Activated B cell treated with CpG ODN at 0.5 μM for 24 hours (primary cell): ENCODE measurements at regions of chr20 and their contacts with region 1.

Region 1: DNA sequence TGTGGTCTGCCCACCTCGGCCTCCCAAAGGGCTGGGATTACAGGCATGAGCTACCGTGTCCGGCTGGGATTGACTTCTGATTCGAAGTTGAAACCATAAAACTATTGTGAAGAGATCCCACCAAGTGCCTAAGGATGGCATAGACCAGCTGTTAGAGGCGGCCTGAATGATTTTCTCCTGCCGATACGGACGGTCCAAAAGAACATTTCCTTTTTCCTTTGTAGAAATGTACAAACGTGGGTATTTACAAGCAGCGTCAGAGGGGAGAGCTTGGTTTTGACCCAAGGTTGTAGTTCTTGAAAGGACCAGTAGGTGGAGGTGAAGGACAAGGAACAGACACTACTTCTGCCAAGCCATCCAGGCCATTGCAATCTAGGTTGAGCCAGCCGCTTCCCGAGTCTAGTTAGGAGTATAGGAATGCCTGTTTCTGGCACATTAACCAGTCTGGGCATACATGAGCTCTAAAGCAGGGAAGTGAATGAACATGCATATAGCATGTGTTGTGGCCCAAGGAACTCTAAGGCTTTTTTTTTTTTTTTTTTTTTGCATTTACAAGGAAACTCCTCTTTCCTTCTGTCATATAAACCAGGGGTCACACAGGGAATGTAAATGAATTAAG is 29.1 kb downstream of the MOCS3 start:
- DNase-seq: no peak
- ATAC-seq: peak; percentile 94
- H3K4me3 Mint-ChIP-seq: no peak overlapping the region
- H3K27ac Mint-ChIP-seq: no peak overlapping the region
- H3K4me1 Mint-ChIP-seq: peaks cover 10% of the 10 kb centered on the region
- H3K27me3 Mint-ChIP-seq: peaks cover 22% of the 10 kb centered on the region
- CTCF ChIP-seq: peak; percentile 44

Region 2: DNA sequence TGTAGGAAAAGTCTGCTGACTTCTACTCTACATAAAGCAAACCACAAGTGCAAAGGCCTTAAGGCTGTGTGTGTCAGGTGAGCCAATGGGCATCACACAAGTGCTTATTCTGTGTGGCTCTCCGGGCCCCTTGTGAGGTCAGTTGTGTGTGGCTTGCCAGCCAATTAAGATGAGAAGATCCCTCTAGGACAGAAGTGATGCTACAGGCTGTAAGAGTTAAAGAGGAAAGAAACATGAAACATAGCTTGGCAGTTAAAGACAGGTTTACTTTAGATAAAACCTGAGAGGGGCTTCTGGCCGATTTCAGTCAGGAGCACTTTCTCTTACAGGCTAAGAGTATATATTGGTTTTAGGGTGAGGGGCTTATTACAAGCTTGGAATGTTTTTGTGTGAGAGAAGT is 312.4 kb after region 1 on chr20:
- CTCF ChIA-PET with region 1: interaction called, 109 read pairs
- POLR2A ChIA-PET with region 1: no interaction called
- intact Hi-C with region 1: no loop called
- DNase-seq: no peak
- ATAC-seq: no peak
- H3K4me3 Mint-ChIP-seq: no peak overlapping the region
- H3K27ac Mint-ChIP-seq: no peak overlapping the region
- H3K4me1 Mint-ChIP-seq: no peaks in the 10 kb centered on the region
- H3K27me3 Mint-ChIP-seq: peaks cover 19% of the 10 kb centered on the region
- CTCF ChIP-seq: no peak

Region 3: DNA sequence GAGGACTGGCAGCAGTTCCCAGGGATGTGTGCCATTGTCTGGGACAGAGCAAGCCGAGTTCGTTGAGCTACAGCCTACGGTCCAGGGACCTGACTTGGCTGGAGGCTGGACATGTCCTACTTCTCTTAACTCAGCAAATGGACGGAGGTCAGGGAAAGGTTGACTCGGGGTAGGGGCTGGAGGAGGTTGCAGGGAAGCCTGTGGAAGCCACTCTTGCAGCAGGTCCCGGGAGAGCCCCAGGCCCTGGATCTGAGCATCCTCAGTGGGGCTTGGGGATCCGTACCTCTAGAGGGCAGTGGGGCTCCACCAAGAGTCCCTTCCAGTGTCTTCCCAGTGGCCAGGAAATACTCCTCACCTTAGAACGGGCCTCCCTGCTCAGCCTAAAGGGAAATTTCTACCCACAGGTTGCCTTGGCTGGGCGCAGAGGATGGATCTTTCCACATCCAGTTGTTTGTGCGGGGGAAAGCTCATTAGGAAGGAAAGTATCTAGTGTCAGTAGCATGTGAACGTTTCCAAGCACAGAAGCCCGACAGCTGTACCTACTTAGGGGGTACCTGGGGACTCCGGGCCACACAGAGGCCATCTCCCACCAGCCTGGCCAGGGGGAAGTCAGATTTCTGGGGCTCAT is 384.6 kb after region 1 on chr20:
- CTCF ChIA-PET with region 1: interaction called, 3 read pairs
- POLR2A ChIA-PET with region 1: no interaction called
- intact Hi-C with region 1: loop called (anchors 5 kb)
- DNase-seq: peak; percentile 42
- ATAC-seq: peak; percentile 62
- H3K4me3 Mint-ChIP-seq: no peak overlapping the region
- H3K27ac Mint-ChIP-seq: no peak overlapping the region
- H3K4me1 Mint-ChIP-seq: peaks cover 4% of the 10 kb centered on the region
- H3K27me3 Mint-ChIP-seq: peaks cover 5% of the 10 kb centered on the region
- CTCF ChIP-seq: peak; percentile 38

Region 4: GRCh38 chr20:51624157-51624731 is 636.5 kb after region 1 on chr20:
- CTCF ChIA-PET with region 1: interaction called, 36 read pairs
- POLR2A ChIA-PET with region 1: no interaction called
- intact Hi-C with region 1: loop called (anchors 1 kb)
- DNase-seq: peak; percentile 55
- ATAC-seq: peak; percentile 64
- H3K4me3 Mint-ChIP-seq: no peak overlapping the region
- H3K27ac Mint-ChIP-seq: no peak overlapping the region
- H3K4me1 Mint-ChIP-seq: peaks cover 2% of the 10 kb centered on the region
- H3K27me3 Mint-ChIP-seq: peaks cover 18% of the 10 kb centered on the region
- CTCF ChIP-seq: no peak

Region 5: GRCh38 chr20:52083627-52084232 is 1096.0 kb after region 1 on chr20:
- CTCF ChIA-PET with region 1: interaction called, 4 read pairs
- POLR2A ChIA-PET with region 1: no interaction called
- intact Hi-C with region 1: loop called (anchors 5 kb)
- DNase-seq: no peak
- ATAC-seq: no peak
- H3K4me3 Mint-ChIP-seq: no peak overlapping the region
- H3K27ac Mint-ChIP-seq: no peak overlapping the region
- H3K4me1 Mint-ChIP-seq: no peaks in the 10 kb centered on the region
- H3K27me3 Mint-ChIP-seq: no peaks in the 10 kb centered on the region
- CTCF ChIP-seq: no peak

Region 6: DNA sequence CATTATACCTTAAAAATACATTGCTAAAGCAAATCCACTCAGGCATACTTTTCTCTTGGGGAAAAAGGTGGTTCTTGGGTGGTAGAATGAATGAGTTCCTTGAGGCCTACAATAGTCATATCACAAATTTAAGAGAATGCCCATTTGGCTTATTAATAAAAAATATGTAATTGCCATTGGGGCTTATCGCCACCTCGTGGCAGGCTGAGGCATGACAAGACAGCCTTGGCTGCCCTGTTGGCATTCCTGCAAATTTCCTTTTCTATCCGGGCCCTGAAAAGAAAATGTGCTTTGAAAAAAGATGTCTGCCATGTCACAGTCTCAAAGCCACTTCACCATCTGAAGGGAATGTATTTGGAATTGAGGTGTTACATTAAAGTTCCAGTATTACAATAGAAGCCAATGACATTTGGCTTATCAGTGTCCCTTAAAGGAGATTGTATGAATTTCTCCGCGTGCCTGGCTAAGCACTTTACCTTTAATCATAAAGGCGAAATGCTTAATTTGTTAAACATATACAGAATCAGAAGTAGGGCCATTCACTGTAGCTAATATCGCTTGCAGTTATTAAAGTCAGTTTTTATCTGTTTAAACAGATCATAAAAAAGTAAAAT is 1392.1 kb after region 1 on chr20:
- CTCF ChIA-PET with region 1: interaction called, 4 read pairs
- POLR2A ChIA-PET with region 1: no interaction called
- intact Hi-C with region 1: loop called (anchors 1 kb)
- DNase-seq: no peak
- ATAC-seq: no peak
- H3K4me3 Mint-ChIP-seq: no peak overlapping the region
- H3K27ac Mint-ChIP-seq: no peak overlapping the region
- H3K4me1 Mint-ChIP-seq: no peaks in the 10 kb centered on the region
- H3K27me3 Mint-ChIP-seq: peaks cover 2% of the 10 kb centered on the region
- CTCF ChIP-seq: peak; percentile 73